ENCODE measurements at regions of chr19 and their contacts with region 1.

Region 1: GRCh38 chr19:44845612-44846454 is at the start of gene NECTIN2:
- DNase-seq: peak; percentile 99
- H3K4me3 Mint-ChIP-seq: peak within 1 kb of the TSS; percentile 84
- H3K27ac Mint-ChIP-seq: peak within 1 kb of the TSS; percentile 95
- H3K4me1 Mint-ChIP-seq: peaks cover 27% of the 10 kb centered on the region
- H3K27me3 Mint-ChIP-seq: no peaks in the 10 kb centered on the region
- CTCF ChIP-seq: peak; percentile 82
- total RNA-seq, gene NECTIN2: 46.5 and 56.7 TPM in 2 replicates

Region 2: GRCh38 chr19:44576843-44577565 is 268.8 kb before region 1 on chr19:
- CTCF ChIA-PET with region 1: interaction called, 3 read pairs
- POLR2A ChIA-PET with region 1: no interaction called
- intact Hi-C with region 1: loop called (anchors 1 kb)
- DNase-seq: peak; percentile 78
- H3K4me3 Mint-ChIP-seq: no peak overlapping the region
- H3K27ac Mint-ChIP-seq: no peak overlapping the region
- H3K4me1 Mint-ChIP-seq: no peaks in the 10 kb centered on the region
- H3K27me3 Mint-ChIP-seq: no peaks in the 10 kb centered on the region
- CTCF ChIP-seq: peak; percentile 61

Region 3: DNA sequence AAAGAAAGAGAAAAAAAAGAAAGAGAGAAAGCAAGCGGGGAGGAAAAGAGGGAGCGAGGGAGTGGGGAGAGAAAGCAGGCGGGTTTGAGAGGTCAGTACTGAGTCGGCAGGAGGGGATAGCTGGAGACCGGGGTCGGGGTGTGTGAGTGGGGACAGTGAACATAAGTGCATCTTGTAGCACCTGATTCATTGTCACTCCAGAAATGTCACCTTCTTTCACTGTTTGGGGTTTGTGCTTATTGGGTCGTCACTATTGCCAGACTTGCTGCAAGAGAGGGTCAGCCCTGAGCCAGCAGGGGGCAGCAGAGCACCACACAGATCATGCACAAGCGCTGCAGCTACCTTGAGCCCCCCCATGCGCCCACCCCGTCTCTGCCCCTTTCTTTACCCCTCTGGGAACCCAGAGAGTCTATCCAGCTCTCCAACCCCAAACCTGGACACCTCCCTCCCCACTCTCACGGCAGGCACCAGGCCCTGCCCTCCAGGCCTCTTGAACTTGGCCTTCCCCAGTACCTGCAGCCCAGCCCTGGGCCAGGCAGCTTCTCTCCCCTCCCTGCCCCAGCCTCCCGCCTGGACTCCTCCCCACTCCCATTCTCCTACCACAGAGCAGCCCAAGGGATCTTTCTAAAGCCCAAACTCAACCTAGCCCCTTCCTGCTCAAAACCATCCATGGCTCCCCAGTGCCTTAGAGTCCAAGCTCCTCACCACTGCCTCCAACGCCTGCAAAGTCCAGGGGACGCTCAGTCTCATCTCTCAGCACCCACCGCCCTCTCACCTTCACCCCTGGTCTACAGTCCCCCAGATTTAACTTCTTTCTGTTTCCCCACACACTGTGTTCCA is 156.6 kb before region 1 on chr19:
- CTCF ChIA-PET with region 1: interaction called, 3 read pairs
- POLR2A ChIA-PET with region 1: no interaction called
- intact Hi-C with region 1: loop called (anchors 1 kb)
- DNase-seq: peak; percentile 61
- H3K4me3 Mint-ChIP-seq: no peak overlapping the region
- H3K27ac Mint-ChIP-seq: no peak overlapping the region
- H3K4me1 Mint-ChIP-seq: peaks cover 25% of the 10 kb centered on the region
- H3K27me3 Mint-ChIP-seq: no peaks in the 10 kb centered on the region
- CTCF ChIP-seq: peak; percentile 94

Region 4: DNA sequence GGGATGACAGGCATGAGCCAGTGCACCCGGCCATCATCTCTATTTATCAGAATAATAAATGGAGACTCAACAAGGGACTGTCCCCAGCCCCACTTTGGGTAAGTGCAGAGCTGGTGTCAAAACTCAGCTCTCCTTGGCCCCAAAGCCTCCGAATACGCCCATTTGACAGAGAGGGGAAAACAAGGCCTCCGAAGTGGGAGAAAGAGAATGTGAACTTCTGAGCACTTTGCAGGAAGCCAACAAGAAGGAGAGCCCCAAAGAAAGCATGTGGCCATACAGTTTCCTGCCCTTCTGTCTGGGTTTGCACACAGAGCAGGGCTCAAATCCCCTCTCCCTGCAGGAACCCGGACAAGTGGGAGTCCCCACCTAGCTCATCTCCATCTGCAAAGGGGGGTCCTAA is 145.3 kb before region 1 on chr19:
- CTCF ChIA-PET with region 1: no interaction called
- POLR2A ChIA-PET with region 1: no interaction called
- intact Hi-C with region 1: no loop called
- DNase-seq: no peak
- H3K4me3 Mint-ChIP-seq: no peak overlapping the region
- H3K27ac Mint-ChIP-seq: no peak overlapping the region
- H3K4me1 Mint-ChIP-seq: no peaks in the 10 kb centered on the region
- H3K27me3 Mint-ChIP-seq: no peaks in the 10 kb centered on the region
- CTCF ChIP-seq: no peak

Region 5: GRCh38 chr19:44770550-44771257 is 75.1 kb before region 1 on chr19:
- CTCF ChIA-PET with region 1: interaction called, 14 read pairs
- POLR2A ChIA-PET with region 1: interaction called, 3 read pairs
- intact Hi-C with region 1: loop called (anchors 1 kb)
- DNase-seq: peak; percentile 99
- H3K4me3 Mint-ChIP-seq: peak overlapping the region; percentile 41
- H3K27ac Mint-ChIP-seq: no peak overlapping the region
- H3K4me1 Mint-ChIP-seq: peaks cover 24% of the 10 kb centered on the region
- H3K27me3 Mint-ChIP-seq: no peaks in the 10 kb centered on the region
- CTCF ChIP-seq: peak; percentile 77

Region 6: GRCh38 chr19:44782729-44783128 is 63.1 kb before region 1 on chr19:
- CTCF ChIA-PET with region 1: interaction called, 27 read pairs
- POLR2A ChIA-PET with region 1: no interaction called
- intact Hi-C with region 1: loop called (anchors 1 kb)
- DNase-seq: no peak
- H3K4me3 Mint-ChIP-seq: no peak overlapping the region
- H3K27ac Mint-ChIP-seq: no peak overlapping the region
- H3K4me1 Mint-ChIP-seq: no peaks in the 10 kb centered on the region
- H3K27me3 Mint-ChIP-seq: no peaks in the 10 kb centered on the region
- CTCF ChIP-seq: no peak

Region 7: GRCh38 chr19:44807652-44808462 is 38.0 kb before region 1 on chr19:
- CTCF ChIA-PET with region 1: interaction called, 10 read pairs
- POLR2A ChIA-PET with region 1: interaction called, 8 read pairs
- intact Hi-C with region 1: no loop called
- DNase-seq: peak; percentile 48
- H3K4me3 Mint-ChIP-seq: peak overlapping the region; percentile 53
- H3K27ac Mint-ChIP-seq: no peak overlapping the region
- H3K4me1 Mint-ChIP-seq: peaks cover 17% of the 10 kb centered on the region
- H3K27me3 Mint-ChIP-seq: no peaks in the 10 kb centered on the region
- CTCF ChIP-seq: peak; percentile 35

Region 8: GRCh38 chr19:44890366-44891015 is 44.7 kb after region 1 on chr19:
- CTCF ChIA-PET with region 1: interaction called, 6 read pairs
- POLR2A ChIA-PET with region 1: interaction called, 17 read pairs
- intact Hi-C with region 1: loop called (anchors 1 kb)
- DNase-seq: peak; percentile 100
- H3K4me3 Mint-ChIP-seq: peak overlapping the region; percentile 74
- H3K27ac Mint-ChIP-seq: peak overlapping the region; percentile 70
- H3K4me1 Mint-ChIP-seq: peaks cover 25% of the 10 kb centered on the region
- H3K27me3 Mint-ChIP-seq: no peaks in the 10 kb centered on the region
- CTCF ChIP-seq: no peak